Activated CD4-positive, alpha-beta memory T cell treated with anti-CD3 and anti-CD28 coated beads for 36 hours (primary cell): ENCODE measurements at regions of chr10 and their contacts with region 1.

Region 1: DNA sequence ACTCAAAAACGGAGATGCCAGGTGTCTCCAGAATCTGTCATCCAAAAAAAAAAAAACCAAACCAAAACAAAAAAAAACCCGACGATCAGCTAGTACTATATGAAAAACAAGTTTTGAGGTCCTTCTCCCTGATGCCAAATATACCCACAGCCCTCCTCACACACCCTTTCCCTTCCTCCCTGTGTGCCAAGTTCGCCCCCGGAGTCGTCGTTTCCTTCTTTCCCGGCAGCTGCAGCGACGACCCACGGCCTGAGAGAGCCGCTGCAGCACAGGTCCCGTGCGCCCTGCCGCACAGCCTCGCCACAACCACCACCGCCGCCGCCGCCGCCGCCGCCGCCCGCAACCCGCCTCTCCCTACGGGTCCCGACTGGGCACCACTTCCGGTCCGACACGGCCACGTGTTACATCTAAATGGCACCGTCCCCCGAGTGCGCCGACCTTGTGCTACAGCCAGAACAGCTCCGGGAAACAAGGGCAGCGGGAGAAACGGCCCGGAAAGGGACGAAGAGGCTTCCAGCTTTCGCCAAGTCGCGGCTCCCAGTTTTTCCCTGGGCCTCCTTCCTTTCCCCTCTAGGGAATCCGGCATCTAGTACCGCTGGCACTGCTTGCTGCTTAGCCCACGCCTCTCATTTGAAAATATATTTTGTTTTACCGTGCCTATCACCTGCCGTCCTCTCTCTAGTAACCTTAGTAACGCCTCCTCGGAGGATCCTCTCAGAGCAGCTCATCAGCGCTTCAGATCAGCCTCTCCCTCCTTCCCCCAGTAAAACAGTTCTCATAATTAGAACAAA is at the start of gene FRA10AC1:
- DNase-seq: peak; percentile 92
- H3K4me3 Mint-ChIP-seq: no peak within 1 kb of the TSS
- H3K27ac Mint-ChIP-seq: no peak within 1 kb of the TSS
- H3K4me1 Mint-ChIP-seq: peaks cover 15% of the 10 kb centered on the region
- H3K27me3 Mint-ChIP-seq: no peaks in the 10 kb centered on the region
- total RNA-seq, gene FRA10AC1: 18.6 to 19.0 TPM

Region 2: DNA sequence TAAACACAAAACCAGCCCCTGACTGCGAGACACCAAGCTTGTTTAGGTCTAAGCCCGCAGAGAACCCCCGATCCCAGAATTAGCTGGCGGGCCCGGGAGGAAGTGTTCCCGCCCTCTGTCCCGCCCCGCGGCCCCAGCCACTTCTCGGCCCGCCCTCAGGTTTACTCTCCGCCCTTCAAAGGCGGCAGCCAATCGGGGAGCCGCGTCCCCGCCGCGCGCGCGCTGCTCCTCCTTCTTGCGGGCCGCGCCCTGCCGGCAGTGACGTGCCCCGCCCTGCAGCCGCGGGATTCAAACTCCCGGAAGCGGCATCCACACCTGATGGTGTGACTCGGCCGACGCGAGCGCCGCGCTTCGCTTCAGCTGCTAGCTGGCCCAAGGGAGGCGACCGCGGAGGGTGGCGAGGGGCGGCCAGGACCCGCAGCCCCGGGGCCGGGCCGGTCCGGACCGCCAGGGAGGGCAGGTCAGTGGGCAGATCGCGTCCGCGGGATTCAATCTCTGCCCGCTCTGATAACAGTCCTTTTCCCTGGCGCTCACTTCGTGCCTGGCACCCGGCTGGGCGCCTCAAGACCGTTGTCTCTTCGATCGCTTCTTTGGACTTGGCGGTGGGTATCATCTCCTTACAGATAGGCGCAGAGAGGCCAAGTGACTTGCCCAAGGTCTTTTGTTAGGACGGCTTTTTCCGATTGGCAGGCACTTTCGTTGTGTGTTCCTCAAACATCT is 205.9 kb before region 1 on chr10 and contains the start of gene CEP55:
- CTCF ChIA-PET with region 1: no interaction called
- POLR2A ChIA-PET with region 1: interaction called, 3 read pairs
- intact Hi-C with region 1: loop called (anchors 1 kb)
- DNase-seq: peak; percentile 98
- H3K4me3 Mint-ChIP-seq: peak within 1 kb of the TSS; percentile 90
- H3K27ac Mint-ChIP-seq: peak within 1 kb of the TSS; percentile 74
- H3K4me1 Mint-ChIP-seq: peaks cover 27% of the 10 kb centered on the region
- H3K27me3 Mint-ChIP-seq: no peaks in the 10 kb centered on the region
- total RNA-seq, gene CEP55: 88.0 to 91.3 TPM

Region 3: GRCh38 chr10:93726024-93726423 is 23.6 kb after region 1 on chr10:
- CTCF ChIA-PET with region 1: no interaction called
- POLR2A ChIA-PET with region 1: no interaction called
- intact Hi-C with region 1: no loop called
- DNase-seq: no peak
- H3K4me3 Mint-ChIP-seq: no peak overlapping the region
- H3K27ac Mint-ChIP-seq: no peak overlapping the region
- H3K4me1 Mint-ChIP-seq: no peaks in the 10 kb centered on the region
- H3K27me3 Mint-ChIP-seq: peaks cover 33% of the 10 kb centered on the region

Region 4: DNA sequence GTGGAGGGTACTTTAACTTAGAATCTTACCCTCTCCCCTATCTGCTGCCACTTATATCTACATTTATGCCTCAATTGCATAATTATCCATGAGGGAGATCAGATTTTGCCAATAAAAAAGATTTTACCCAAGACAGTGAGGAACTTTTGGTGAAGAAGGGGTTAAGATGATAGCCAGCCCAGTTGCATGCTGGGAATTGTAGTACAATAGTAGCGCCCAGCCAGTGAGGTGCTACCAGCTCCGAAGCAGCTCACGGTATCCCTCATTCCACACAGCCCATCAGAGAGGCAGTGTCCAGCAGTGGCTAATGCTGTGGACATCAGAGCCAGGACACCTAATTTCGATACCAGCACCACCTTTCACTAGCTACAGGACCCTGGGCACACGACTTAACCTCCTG is 49.4 kb after region 1 on chr10:
- CTCF ChIA-PET with region 1: no interaction called
- POLR2A ChIA-PET with region 1: no interaction called
- intact Hi-C with region 1: loop called (anchors 5 kb)
- DNase-seq: no peak
- H3K4me3 Mint-ChIP-seq: no peak overlapping the region
- H3K27ac Mint-ChIP-seq: no peak overlapping the region
- H3K4me1 Mint-ChIP-seq: peaks cover 9% of the 10 kb centered on the region
- H3K27me3 Mint-ChIP-seq: peaks cover 10% of the 10 kb centered on the region

Region 5: GRCh38 chr10:93816123-93816747 is 113.8 kb after region 1 on chr10:
- CTCF ChIA-PET with region 1: interaction called, 5 read pairs
- POLR2A ChIA-PET with region 1: interaction called, 3 read pairs
- intact Hi-C with region 1: loop called (anchors 1 kb)
- DNase-seq: peak; percentile 57
- H3K4me3 Mint-ChIP-seq: no peak overlapping the region
- H3K27ac Mint-ChIP-seq: no peak overlapping the region
- H3K4me1 Mint-ChIP-seq: no peaks in the 10 kb centered on the region
- H3K27me3 Mint-ChIP-seq: peaks cover 36% of the 10 kb centered on the region

Region 6: DNA sequence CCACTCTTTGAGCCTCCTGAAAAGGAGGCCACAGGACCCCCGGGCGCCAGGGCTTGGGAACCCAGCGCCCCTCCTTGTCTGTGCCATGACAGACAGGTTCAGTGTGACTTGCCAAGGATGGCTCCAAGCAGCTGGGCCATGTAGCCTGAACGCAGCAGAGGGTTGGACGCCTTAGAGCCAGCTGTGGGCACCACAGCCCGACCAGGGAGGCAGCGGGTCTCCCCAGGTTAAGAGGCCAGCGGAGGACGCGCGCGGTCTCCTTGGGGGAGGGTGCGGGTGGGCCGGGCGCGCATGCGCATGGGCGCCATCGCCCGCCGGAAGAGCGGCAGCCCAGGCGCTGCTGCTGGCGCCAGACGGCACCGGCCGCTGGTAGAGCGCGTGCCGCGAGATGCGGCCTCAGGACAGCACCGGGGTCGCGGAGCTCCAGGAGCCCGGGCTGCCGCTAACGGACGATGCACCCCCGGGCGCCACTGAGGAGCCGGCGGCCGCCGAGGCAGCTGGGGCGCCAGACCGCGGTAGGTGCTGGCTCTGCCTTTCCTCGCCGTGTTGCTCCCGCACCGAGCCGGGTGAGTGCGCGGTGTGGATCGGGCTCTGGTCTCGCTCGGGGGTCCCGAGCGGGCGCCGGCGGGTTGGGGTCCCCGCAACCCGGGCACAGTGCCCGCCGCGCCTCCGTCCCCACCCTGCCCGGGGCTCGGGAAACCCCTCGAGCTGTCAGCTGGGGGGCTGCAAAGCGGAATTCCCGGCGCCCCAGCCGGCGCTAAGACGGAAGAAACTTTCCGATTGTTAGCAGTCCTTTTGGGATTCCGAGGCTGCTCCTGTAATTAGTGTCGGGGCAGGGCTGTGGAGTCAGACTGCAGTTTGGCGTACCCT is 191.5 kb after region 1 on chr10 and contains the start of gene SLC35G1:
- CTCF ChIA-PET with region 1: no interaction called
- POLR2A ChIA-PET with region 1: no interaction called
- intact Hi-C with region 1: loop called (anchors 5 kb)
- DNase-seq: peak; percentile 80
- H3K4me3 Mint-ChIP-seq: peak within 1 kb of the TSS; percentile 76
- H3K27ac Mint-ChIP-seq: no peak within 1 kb of the TSS
- H3K4me1 Mint-ChIP-seq: peaks cover 30% of the 10 kb centered on the region
- H3K27me3 Mint-ChIP-seq: peaks cover 11% of the 10 kb centered on the region
- total RNA-seq, gene SLC35G1: 2.8 to 3.0 TPM

Region 7: GRCh38 chr10:94362360-94363250 is 660.2 kb after region 1 on chr10 and contains the start of gene NOC3L:
- CTCF ChIA-PET with region 1: no interaction called
- POLR2A ChIA-PET with region 1: no interaction called
- intact Hi-C with region 1: loop called (anchors 2 kb)
- DNase-seq: peak; percentile 96
- H3K4me3 Mint-ChIP-seq: peak within 1 kb of the TSS; percentile 88
- H3K27ac Mint-ChIP-seq: peak within 1 kb of the TSS; percentile 89
- H3K4me1 Mint-ChIP-seq: peaks cover 33% of the 10 kb centered on the region
- H3K27me3 Mint-ChIP-seq: peaks cover 6% of the 10 kb centered on the region
- total RNA-seq, gene NOC3L: 37.6 to 39.2 TPM